Activated CD8-positive, alpha-beta memory T cell treated with anti-CD3 and anti-CD28 coated beads, Interleukin-2, amount 10 ng/mL, durations not matched to agents 7 days and 5 days (primary cell): ENCODE measurements at regions of chr15 and their contacts with region 1.

Region 1: DNA sequence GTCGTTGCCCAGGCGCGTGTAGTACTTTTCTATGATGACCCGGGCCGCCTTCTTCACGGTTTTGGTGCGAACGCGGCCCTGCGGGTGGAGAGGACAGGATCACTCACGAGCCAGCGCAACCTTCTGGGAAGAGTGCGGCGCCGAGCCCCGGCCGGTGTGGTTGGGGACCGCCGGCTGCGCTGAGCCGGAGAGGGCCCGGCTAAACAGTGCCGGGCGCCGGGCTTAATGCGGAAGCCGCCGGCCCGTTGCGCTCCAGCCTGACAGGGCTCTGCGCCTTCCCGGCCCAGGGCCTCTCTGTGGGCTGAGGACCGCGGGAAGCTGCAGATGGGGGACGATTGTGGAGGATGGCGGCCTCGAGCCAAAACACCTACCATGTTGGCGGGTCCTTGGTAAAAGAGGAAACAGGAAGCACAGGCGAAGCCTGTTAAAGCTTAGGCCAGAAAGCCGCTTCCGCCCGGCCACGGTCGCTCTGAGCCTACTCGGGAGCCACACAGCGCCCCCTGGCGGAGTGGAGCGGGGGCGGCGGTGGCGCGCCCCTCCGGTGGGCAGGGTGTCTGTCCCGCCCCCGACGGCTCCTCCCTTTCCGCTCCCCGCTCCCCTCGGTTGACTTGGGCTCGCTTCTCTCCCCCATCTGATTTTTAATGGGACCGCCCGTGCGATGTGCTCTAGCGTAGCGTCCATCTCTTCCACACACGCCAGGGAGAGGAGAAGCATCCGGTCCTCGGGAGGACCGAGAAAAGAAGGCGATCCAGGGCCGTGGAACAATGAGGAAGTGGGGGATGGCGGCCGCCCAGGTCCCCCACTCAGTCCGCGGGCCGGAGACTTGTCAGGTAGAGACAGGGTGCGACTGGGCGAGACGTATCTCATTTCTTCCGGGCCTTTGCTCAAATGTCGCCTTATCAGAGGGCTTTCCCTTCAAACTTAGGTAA is at the start of gene RPS17:
- DNase-seq: peak; percentile 97
- ATAC-seq: peak; percentile 96
- H3K4me3 Mint-ChIP-seq: peak within 1 kb of the TSS; percentile 90
- H3K27ac Mint-ChIP-seq: peak within 1 kb of the TSS; percentile 96
- H3K4me1 Mint-ChIP-seq: peaks cover 40% of the 10 kb centered on the region
- H3K27me3 Mint-ChIP-seq: peaks cover 14% of the 10 kb centered on the region
- total RNA-seq, gene RPS17: 1,238 to 1,479 TPM

Region 2: GRCh38 chr15:82985688-82986441 is 445.5 kb after region 1 on chr15 and contains the start of gene RAMAC:
- CTCF ChIA-PET with region 1: interaction called, 12 read pairs
- DNase-seq: peak; percentile 95
- ATAC-seq: peak; percentile 95
- H3K4me3 Mint-ChIP-seq: peak within 1 kb of the TSS; percentile 100
- H3K27ac Mint-ChIP-seq: peak within 1 kb of the TSS; percentile 97
- H3K4me1 Mint-ChIP-seq: peaks cover 30% of the 10 kb centered on the region
- H3K27me3 Mint-ChIP-seq: no peaks in the 10 kb centered on the region
- total RNA-seq, gene RAMAC: 20.5 to 27.8 TPM